ENCODE measurements at regions of chr12 and their contacts with region 1.

Region 1: DNA sequence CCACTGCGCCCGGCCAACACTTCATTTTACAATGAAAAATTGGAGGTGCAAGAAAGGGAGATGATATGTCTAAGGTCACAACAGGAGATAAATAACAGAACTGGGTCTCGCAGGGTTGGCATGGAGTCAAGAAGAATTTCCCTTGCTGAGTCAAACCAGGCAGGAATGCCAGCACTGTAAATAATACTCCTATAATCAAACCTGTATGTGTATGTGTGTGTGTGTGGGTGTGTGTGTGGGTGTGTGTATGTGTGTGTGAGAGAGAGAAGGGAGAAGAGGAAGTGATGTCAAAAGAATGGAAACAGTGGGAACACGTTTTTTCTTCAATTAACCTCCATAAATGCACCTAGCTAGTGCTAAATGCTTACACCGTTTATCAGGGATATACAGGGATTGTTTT is 70.4 kb downstream of the TMEM116 start:
- DNase-seq: peak; percentile 76
- H3K4me3 ChIP-seq: no peak overlapping the region
- H3K27ac ChIP-seq: no peak overlapping the region
- H3K4me1 ChIP-seq: peaks cover 2% of the 10 kb centered on the region
- H3K27me3 ChIP-seq: no peaks in the 10 kb centered on the region
- CTCF ChIP-seq: no peak
- POLR2A ChIP-seq: no peak

Region 2: DNA sequence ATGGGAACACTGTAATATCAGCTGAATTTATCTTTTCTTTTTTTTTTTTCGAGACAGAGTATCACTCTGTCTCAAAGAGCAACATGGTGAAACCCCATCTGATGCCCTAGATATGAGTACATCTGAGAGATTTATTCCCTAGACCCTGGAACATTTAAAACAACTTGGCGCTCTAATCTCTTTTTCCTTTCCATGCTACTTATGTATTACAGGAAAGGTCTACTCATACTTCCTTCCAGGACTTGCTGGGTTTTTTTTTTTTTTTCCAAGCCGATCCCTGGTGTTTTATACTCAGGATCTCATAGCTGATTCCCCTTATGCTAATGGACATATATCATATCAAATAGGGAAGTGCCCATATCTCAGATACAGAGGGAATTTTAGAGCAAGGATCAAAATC is 17.4 kb before region 1 on chr12:
- CTCF ChIA-PET with region 1: interaction called, 6 read pairs
- POLR2A ChIA-PET with region 1: no interaction called
- dilution Hi-C with region 1: no loop called
- intact Hi-C with region 1: loop called (anchors 2 kb)
- DNase-seq: peak; percentile 82
- H3K4me3 ChIP-seq: no peak overlapping the region
- H3K27ac ChIP-seq: peak overlapping the region; percentile 22
- H3K4me1 ChIP-seq: peaks cover 17% of the 10 kb centered on the region
- H3K27me3 ChIP-seq: no peaks in the 10 kb centered on the region
- CTCF ChIP-seq: no peak
- POLR2A ChIP-seq: no peak

Region 3: DNA sequence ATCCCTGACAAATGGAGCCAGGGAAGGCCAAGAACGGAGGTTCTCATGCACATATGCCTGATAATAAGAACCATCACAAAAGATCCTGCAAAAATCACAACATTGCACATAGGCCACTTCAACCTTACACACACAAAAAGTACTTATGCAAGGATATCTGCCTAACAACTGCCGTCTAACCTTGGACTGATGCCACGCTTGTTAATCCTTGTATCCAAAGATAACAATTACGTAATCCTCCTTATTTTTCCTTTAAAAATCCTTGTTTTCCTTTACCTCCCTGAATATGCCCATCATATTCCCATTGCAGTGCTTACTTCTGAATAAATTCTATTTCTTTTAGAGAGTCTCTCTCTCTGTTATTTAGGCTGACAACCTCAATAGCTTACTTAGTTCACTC is 10.9 kb after region 1 on chr12:
- CTCF ChIA-PET with region 1: interaction called, 11 read pairs
- POLR2A ChIA-PET with region 1: no interaction called
- dilution Hi-C with region 1: no loop called
- intact Hi-C with region 1: no loop called
- DNase-seq: peak; percentile 84
- H3K4me3 ChIP-seq: no peak overlapping the region
- H3K27ac ChIP-seq: no peak overlapping the region
- H3K4me1 ChIP-seq: no peaks in the 10 kb centered on the region
- H3K27me3 ChIP-seq: no peaks in the 10 kb centered on the region
- CTCF ChIP-seq: no peak
- POLR2A ChIP-seq: no peak

Region 4: DNA sequence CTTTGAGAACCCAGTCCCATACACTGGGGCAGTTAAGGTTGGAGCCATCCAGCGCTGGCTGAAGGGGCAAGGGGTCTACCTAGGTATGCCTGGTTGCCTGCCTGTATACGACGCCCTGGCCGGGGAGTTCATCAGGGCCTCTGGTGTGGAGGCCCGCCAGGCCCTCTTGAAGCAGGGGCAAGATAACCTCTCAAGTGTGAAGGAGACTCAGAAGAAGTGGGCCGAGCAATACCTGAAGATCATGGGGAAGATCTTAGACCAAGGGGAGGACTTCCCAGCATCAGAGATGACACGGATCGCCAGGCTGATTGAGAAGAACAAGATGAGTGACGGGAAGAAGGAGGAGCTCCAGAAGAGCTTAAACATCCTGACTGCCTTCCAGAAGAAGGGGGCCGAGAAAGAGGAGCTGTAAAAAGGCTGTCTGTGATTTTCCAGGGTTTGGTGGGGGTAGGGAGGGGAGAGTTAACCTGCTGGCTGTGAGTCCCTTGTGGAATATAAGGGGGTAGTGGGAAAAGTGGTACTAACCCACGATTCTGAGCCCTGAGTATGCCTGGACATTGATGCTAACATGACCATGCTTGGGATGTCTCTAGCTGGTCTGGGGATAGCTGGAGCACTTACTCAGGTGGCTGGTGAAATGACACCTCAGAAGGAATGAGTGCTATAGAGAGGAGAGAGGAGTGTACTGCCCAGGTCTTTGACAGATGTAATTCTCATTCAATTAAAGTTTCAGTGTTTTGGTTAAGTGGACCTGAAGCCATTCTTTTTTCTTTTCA is 79.9 kb after region 1 on chr12:
- CTCF ChIA-PET with region 1: interaction called, 14 read pairs
- POLR2A ChIA-PET with region 1: no interaction called
- dilution Hi-C with region 1: no loop called
- intact Hi-C with region 1: no loop called
- DNase-seq: no peak
- H3K4me3 ChIP-seq: no peak overlapping the region
- H3K27ac ChIP-seq: no peak overlapping the region
- H3K4me1 ChIP-seq: peaks cover 24% of the 10 kb centered on the region
- H3K27me3 ChIP-seq: no peaks in the 10 kb centered on the region
- CTCF ChIP-seq: no peak
- POLR2A ChIP-seq: no peak

Region 5: GRCh38 chr12:112049351-112049750 is 106.8 kb after region 1 on chr12:
- CTCF ChIA-PET with region 1: interaction called, 24 read pairs
- POLR2A ChIA-PET with region 1: no interaction called
- dilution Hi-C with region 1: no loop called
- intact Hi-C with region 1: no loop called
- DNase-seq: no peak
- H3K4me3 ChIP-seq: no peak overlapping the region
- H3K27ac ChIP-seq: no peak overlapping the region
- H3K4me1 ChIP-seq: peaks cover 17% of the 10 kb centered on the region
- H3K27me3 ChIP-seq: no peaks in the 10 kb centered on the region
- CTCF ChIP-seq: no peak
- POLR2A ChIP-seq: no peak

Region 6: GRCh38 chr12:112170376-112170775 is 227.8 kb after region 1 on chr12:
- CTCF ChIA-PET with region 1: interaction called, 3 read pairs
- POLR2A ChIA-PET with region 1: no interaction called
- dilution Hi-C with region 1: no loop called
- intact Hi-C with region 1: loop called (anchors 10 kb)
- DNase-seq: no peak
- H3K4me3 ChIP-seq: no peak overlapping the region
- H3K27ac ChIP-seq: no peak overlapping the region
- H3K4me1 ChIP-seq: no peaks in the 10 kb centered on the region
- H3K27me3 ChIP-seq: no peaks in the 10 kb centered on the region
- CTCF ChIP-seq: peak; percentile 38 to 46
- POLR2A ChIP-seq: no peak

Region 7: DNA sequence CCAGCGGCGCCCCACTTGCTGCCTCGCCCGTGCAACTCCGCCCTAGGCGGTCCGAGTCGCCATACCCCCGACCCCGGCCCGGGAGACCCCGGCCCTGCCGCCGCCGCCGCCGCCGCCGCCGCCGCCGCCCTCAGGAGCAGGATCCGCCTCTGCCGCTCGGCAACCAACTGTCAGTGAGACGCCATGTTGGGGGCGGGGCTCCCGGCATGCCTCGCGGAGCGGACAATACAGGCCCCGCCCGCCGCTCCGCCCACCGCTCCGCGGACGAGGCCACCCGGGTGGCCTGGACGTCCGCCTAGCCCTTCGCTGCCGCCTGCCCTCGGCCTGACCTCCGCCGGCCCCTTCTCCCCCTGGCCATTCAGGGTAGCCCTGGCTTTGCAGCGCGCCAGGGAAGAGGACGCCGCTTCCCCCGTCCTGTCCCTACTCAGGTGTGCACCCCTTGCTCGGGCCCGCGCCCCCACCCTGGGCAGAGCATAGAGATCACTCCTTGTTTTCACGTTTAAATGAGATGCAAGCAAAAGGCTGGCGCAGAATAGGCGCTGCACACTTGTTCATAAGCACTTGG is 439.8 kb after region 1 on chr12 and contains the start of gene HECTD4:
- CTCF ChIA-PET with region 1: interaction called, 19 read pairs
- POLR2A ChIA-PET with region 1: no interaction called
- dilution Hi-C with region 1: no loop called
- intact Hi-C with region 1: loop called (anchors 1 kb)
- DNase-seq: peak; percentile 84
- H3K4me3 ChIP-seq: peak within 1 kb of the TSS; percentile 71 to 95 (median 72)
- H3K27ac ChIP-seq: peak within 1 kb of the TSS; percentile 35
- H3K4me1 ChIP-seq: peaks cover 12% of the 10 kb centered on the region
- H3K27me3 ChIP-seq: no peaks in the 10 kb centered on the region
- CTCF ChIP-seq: no peak
- POLR2A ChIP-seq: peak; percentile 93
- total RNA-seq, gene HECTD4: 38.8 and 47.7 TPM in 2 replicates

Measured in endothelial cell of umbilical vein (primary cell).